ENCODE measurements at regions of chr2 and their contacts with region 1.

Region 1: DNA sequence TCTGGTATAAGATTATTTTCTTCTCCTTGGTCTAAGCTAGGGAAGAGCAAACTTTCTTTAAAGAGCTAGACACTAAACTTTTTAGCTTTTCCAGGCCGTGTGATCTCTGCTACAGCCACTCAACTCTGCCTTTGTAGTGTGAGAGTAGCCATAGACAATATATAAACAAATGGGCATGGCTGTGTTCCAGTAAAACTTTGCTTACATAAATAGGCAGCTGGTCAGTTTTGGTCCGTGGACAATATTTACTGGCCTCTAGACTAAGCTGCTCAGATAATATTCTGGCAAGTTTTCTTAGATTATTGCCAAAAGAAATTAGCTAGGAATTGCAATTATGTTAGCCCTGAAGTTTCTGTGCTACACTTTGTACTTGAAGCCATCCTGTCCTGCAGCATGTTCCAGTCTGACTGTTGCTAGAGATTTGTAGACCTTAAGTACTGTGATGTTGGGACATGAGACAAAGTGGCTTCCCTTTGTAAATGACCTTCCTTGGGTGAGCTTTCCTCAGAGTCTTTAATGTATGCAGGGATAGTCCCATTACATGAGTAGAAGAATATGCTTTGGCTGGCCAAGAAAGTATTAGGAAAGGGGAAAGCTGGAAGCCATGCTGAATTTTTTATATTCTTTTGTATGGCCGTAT is 126.9 kb downstream of the SOX11 start:
- DNase-seq: no peak
- ATAC-seq: no peak
- H3K4me3 ChIP-seq: no peak overlapping the region
- H3K27ac ChIP-seq: no peak overlapping the region
- H3K4me1 ChIP-seq: no peaks in the 10 kb centered on the region
- H3K27me3 ChIP-seq: no peaks in the 10 kb centered on the region
- CTCF ChIP-seq: no peak
- EP300 ChIP-seq: no peak
- POLR2A ChIP-seq: no peak
- RAD21 ChIP-seq: no peak

Region 2: DNA sequence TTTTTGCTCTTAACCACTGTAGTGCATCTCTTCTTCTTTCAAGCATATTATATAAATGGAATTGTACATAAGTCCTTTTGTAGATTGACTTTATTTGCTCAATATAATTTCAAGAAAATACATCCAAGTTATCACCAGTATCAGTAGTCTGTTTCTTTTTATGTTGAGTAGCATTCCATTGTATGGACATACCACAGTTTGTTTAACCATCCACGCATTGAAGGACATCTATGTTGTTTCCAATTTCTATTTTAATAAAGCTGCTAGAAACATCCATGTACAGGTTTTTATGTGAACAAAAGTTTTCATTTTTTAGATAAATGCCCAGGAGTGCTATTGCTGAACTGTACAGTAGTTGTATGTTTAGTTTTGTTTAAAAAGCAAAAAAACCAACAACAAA is 514.4 kb before region 1 on chr2:
- CTCF ChIA-PET with region 1: no interaction called
- POLR2A ChIA-PET with region 1: no interaction called
- RAD21 ChIA-PET with region 1: no interaction called
- SMC1A ChIA-PET with region 1: no interaction called
- in situ Hi-C with region 1: no loop called
- intact Hi-C with region 1: loop called (anchors 5 kb)
- DNase-seq: no peak
- ATAC-seq: no peak
- H3K4me3 ChIP-seq: no peak overlapping the region
- H3K27ac ChIP-seq: no peak overlapping the region
- H3K4me1 ChIP-seq: no peaks in the 10 kb centered on the region
- H3K27me3 ChIP-seq: no peaks in the 10 kb centered on the region
- CTCF ChIP-seq: no peak
- EP300 ChIP-seq: no peak
- POLR2A ChIP-seq: no peak
- RAD21 ChIP-seq: no peak

Measured in GM12878 (cell line).